ENCODE measurements at regions of chr6 and their contacts with region 1.

Region 1: DNA sequence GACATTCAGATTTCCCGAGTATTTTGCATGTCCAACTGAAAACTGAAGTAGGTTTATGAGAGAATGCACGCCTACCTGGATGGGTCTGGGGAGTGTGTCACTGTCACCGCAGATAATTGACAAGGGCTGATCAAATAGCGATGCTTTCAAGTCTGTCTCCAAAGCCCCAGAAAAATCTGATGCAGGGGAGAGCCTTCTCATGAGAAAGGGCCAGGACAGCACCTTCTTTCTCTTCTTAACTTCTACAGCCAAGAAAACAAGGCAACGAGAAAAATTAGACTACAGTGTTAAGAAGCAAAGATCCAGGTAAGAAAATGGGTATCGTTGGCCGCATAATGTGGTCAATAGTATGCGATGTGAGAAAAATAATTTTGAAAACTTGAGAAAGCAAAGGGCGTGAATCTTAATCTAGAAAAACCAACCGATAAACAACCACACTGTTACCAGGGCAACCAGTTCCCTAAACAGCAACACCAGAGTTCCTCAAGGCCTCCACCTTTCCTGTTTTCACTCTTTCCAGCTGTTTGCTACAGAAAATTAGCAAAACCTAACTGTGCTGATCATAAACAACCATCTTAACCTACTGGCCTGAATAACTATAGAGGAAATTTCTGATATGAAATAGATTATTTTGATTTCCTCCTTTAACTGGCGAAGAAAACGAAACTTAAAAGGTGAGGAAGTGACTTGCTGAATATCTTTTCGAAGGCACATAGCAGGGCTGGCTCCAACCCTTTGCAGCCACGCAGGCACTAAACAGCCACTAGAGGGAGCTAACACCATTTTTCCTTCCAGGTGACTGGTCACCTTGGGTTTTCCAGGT is 2.6 kb downstream of the TAGAP start:
- DNase-seq: no peak
- H3K4me3 ChIP-seq: no peak overlapping the region
- CTCF ChIP-seq: peak; percentile 88

Region 2: DNA sequence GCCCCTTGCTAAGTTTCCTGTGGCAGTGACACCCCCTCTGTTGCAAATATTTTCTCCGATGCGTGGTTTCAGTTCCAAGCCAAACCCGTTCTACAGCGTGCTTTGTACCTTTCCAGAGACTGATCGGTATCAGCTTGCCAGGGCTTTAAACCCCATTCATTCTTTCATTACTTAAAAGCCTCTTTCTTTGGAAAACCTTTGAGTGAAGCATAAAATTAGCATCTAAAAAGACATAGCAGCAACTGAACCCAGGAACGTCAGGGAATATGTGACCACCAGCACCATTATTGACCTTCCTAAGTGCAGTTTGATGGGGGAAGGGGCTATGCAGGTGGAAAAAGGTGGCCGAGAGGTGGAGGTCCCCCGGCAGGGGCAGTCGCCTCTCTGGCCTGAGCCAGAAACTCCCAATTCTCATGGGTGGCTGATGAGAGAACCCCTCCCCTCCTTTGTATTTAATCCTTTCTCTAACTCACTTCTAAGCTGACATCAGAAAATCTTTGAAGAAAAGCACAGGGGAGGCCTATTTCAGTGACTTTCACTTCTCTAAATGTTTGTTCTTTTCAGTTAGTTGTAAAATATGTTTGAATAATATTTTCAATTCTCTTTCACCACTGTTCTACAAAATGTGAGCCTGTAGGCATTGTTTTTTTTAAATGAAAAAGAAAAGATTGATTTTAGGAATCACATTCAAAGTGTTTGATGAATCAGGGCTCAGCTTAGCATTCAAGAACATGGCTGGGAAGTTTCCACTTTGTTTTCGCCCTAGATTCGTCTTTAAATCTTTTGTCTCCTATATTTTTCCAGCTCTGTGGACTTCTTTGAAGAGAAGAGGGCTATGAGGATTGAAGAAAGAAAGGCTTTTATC is 131.5 kb before region 1 on chr6:
- CTCF ChIA-PET with region 1: no interaction called
- POLR2A ChIA-PET with region 1: no interaction called
- DNase-seq: no peak
- H3K4me3 ChIP-seq: no peak overlapping the region
- CTCF ChIP-seq: no peak

Region 3: GRCh38 chr6:159008656-159009288 is 33.4 kb before region 1 on chr6:
- CTCF ChIA-PET with region 1: interaction called, 14 read pairs
- POLR2A ChIA-PET with region 1: no interaction called
- DNase-seq: no peak
- H3K4me3 ChIP-seq: no peak overlapping the region
- CTCF ChIP-seq: peak; percentile 29

Region 4: GRCh38 chr6:159017757-159018559 is 24.3 kb before region 1 on chr6:
- CTCF ChIA-PET with region 1: interaction called, 29 read pairs
- POLR2A ChIA-PET with region 1: no interaction called
- DNase-seq: no peak
- H3K4me3 ChIP-seq: no peak overlapping the region
- CTCF ChIP-seq: no peak

Region 5: GRCh38 chr6:159056003-159056402 is 13.8 kb after region 1 on chr6:
- CTCF ChIA-PET with region 1: interaction called, 40 read pairs
- POLR2A ChIA-PET with region 1: no interaction called
- DNase-seq: no peak
- H3K4me3 ChIP-seq: no peak overlapping the region
- CTCF ChIP-seq: no peak

Region 6: DNA sequence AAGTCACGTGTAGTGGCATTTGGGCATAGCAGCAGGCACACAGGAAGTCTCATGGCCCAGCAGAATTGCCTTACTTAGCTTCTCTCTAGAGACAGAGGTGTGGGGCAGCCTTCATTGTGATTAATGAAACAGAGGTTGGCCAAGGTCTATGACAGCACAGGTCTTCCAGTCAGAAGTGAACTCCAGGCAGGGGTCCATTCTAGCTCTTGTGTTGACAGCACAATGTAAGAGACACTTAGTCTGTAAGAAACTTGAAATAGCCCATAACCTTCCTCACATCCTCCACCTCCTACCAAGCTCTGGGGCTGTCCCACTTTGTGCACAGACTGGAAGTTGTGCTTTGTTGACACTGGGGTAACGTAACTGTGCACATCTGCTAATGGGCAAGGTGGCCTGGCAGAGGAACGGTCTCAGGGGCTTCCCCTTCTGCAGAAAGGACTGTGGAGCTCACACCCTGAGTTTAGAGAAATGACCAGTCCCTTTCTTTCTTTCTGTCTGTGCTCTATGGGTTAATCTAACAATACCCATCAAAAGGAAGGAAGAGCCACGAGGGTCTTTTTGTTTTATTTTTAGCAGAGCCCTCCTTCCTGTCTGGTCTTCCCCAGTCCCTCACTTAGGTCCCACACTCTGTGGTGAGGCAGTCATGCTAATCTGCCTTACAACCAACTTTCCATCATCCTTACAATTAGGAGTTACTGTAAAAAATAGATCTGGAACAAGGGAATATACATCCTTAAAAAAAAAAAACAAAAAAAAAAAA is 38.2 kb after region 1 on chr6:
- CTCF ChIA-PET with region 1: interaction called, 10 read pairs
- POLR2A ChIA-PET with region 1: no interaction called
- DNase-seq: no peak
- H3K4me3 ChIP-seq: no peak overlapping the region
- CTCF ChIP-seq: no peak

Region 7: GRCh38 chr6:159104163-159104925 is 62.1 kb after region 1 on chr6:
- CTCF ChIA-PET with region 1: interaction called, 67 read pairs
- POLR2A ChIA-PET with region 1: no interaction called
- DNase-seq: no peak
- H3K4me3 ChIP-seq: no peak overlapping the region
- CTCF ChIP-seq: peak; percentile 92

Measured in AG04449 (cell line).